Stomach (tissue), 19 donors: ENCODE measurements at regions of chr11 and their contacts with region 1.

Region 1: DNA sequence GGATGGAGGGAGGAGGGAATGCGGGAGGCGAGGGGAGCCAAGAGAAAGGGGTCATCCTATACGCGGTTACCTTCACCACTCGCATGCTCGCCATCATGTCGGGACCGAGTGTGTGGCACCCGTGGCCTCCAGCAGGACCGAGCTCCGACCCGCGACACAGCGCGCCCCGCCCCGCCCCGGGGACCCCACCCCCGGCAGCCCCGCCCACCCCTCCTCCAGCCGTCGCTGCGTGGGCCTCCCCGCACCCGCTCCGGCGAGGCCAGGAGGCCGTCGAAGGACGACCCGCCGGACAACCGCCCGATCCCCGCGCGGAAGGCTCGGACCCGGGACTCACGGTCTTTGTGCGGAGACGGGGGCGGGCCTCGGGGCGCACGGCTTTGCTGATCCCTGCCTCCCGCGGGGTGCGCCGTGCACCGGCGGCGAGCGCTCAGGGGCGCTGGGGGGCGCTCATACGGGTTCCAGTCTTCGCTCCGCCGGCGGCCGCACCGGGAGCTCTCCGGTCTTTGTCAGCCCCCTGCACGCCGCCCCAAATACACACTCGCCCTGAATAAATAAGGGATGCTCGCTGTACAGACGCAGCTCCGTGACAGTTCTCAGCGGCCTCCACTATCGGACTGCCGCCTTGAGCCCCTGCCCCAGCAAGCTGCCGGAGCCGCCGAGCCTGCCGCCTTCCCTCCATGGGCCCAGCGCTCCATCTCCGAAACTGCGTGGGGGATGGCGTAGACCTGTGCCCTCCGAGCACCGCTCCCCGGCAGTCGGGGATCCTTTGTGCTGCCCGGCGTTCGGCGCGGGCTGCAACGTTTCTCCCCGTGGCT is at the start of gene UBE2L6:
- DNase-seq: peak; percentile 85 to 94
- H3K4me3 ChIP-seq: peak within 1 kb of the TSS; percentile 71 to 93 (median 90)
- H3K27ac ChIP-seq: peak within 1 kb of the TSS; percentile 76 to 94 (median 88)
- H3K4me1 ChIP-seq: peaks cover 17 to 45% (median 27%) of the 10 kb centered on the region in 4 donors
- H3K27me3 ChIP-seq: no peaks in the 10 kb centered on the region
- CTCF ChIP-seq: peak in 1 of 7 experiments; percentile 87
- EP300 ChIP-seq: no peak
- POLR2A ChIP-seq: no peak
- total RNA-seq, gene UBE2L6: 2.2 to 57.8 (median 21.3) TPM

Region 2: GRCh38 chr11:57644748-57645688 is 77.3 kb after region 1 on chr11:
- intact Hi-C with region 1: loop called (anchors 2 kb)
- DNase-seq: peak; percentile 85 to 91
- H3K4me3 ChIP-seq: no peak overlapping the region
- H3K27ac ChIP-seq: peak overlapping the region in 3 of 5 donors; percentile 7 to 56 (median 52)
- H3K4me1 ChIP-seq: peaks cover 25 to 79% (median 67%) of the 10 kb centered on the region in 4 donors
- H3K27me3 ChIP-seq: peaks cover 12 to 53% (median 44%) of the 10 kb centered on the region in 3 donors
- CTCF ChIP-seq: peak in 5 of 7 experiments; percentile 54 to 96 (median 88)
- EP300 ChIP-seq: no peak
- POLR2A ChIP-seq: no peak

Region 3: GRCh38 chr11:58192229-58192628 is 624.5 kb after region 1 on chr11:
- intact Hi-C with region 1: no loop called
- DNase-seq: peak in 1 of 2 donors; percentile 14
- H3K4me3 ChIP-seq: no peak overlapping the region
- H3K27ac ChIP-seq: no peak overlapping the region
- H3K4me1 ChIP-seq: no peaks in the 10 kb centered on the region
- H3K27me3 ChIP-seq: no peaks in the 10 kb centered on the region
- CTCF ChIP-seq: no peak
- EP300 ChIP-seq: no peak
- POLR2A ChIP-seq: no peak

Region 4: GRCh38 chr11:58530236-58530635 is 962.5 kb after region 1 on chr11:
- intact Hi-C with region 1: no loop called
- DNase-seq: no peak
- H3K4me3 ChIP-seq: no peak overlapping the region
- H3K27ac ChIP-seq: no peak overlapping the region
- H3K4me1 ChIP-seq: peaks cover 0 to 5% (median 2%) of the 10 kb centered on the region in 4 donors
- H3K27me3 ChIP-seq: no peaks in the 10 kb centered on the region
- CTCF ChIP-seq: no peak
- EP300 ChIP-seq: no peak
- POLR2A ChIP-seq: no peak